Gastrocnemius medialis (tissue), 4 donors: ENCODE measurements at regions of chr9 and their contacts with region 1.

Region 1: GRCh38 chr9:114282926-114283325 is 40.0 kb upstream of the ORM1 start:
- DNase-seq: no peak
- ATAC-seq: no peak
- H3K4me3 ChIP-seq: no peak overlapping the region
- H3K27ac ChIP-seq: no peak overlapping the region
- H3K4me1 ChIP-seq: no peaks in the 10 kb centered on the region
- H3K27me3 ChIP-seq: no peaks in the 10 kb centered on the region
- CTCF ChIP-seq: no peak
- POLR2A ChIP-seq: no peak

Region 2: GRCh38 chr9:114099803-114100270 is 183.1 kb before region 1 on chr9:
- in situ Hi-C with region 1: loop called in 1 of 4 experiments (anchors 5 kb)
- intact Hi-C with region 1: no loop called
- DNase-seq: no peak
- ATAC-seq: no peak
- H3K4me3 ChIP-seq: no peak overlapping the region
- H3K27ac ChIP-seq: no peak overlapping the region
- H3K4me1 ChIP-seq: peaks cover 0 to 6% of the 10 kb centered on the region in 2 donors
- H3K27me3 ChIP-seq: peaks cover 11 to 20% (median 17%) of the 10 kb centered on the region in 3 donors
- CTCF ChIP-seq: no peak
- POLR2A ChIP-seq: no peak

Region 3: DNA sequence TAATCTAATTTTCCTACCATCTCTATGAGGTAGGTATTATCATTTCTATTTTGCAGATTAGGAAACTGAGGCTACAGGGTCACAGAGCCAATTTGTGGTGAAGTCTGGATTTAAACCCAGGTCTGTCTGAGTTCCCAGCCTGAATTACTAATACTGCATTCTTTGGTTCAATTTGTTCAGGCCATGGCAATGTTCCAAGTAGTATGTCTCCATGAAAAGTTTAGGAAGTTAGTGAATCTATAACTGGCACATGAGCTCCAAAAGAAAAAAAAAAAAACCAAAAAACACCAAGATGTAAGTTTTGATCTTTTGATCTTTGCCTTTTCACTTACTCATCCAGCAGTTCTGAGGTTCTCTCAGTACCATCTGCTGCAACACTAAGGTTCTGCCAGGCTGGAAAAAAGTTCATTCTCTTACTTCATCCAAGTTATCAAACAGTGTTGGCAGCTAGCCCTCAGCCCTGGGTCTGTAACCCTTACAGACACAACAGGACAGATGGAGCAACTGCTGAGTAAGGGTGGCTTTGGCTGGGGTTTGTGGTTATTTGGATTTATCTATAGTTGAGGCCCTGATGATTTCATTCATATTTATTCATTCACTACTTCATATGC is 323.8 kb after region 1 on chr9:
- in situ Hi-C with region 1: no loop called
- intact Hi-C with region 1: no loop called
- DNase-seq: no peak
- ATAC-seq: no peak
- H3K4me3 ChIP-seq: no peak overlapping the region
- H3K27ac ChIP-seq: no peak overlapping the region
- H3K4me1 ChIP-seq: no peaks in the 10 kb centered on the region
- H3K27me3 ChIP-seq: no peaks in the 10 kb centered on the region
- CTCF ChIP-seq: no peak
- POLR2A ChIP-seq: no peak